ENCODE measurements at regions of chr9 and their contacts with region 1.

Region 1: GRCh38 chr9:34591248-34591916 is 1.9 kb upstream of the CNTFR start:
- DNase-seq: peak; percentile 70
- H3K4me3 ChIP-seq: no peak overlapping the region
- H3K27ac ChIP-seq: no peak overlapping the region
- H3K4me1 ChIP-seq: no peaks in the 10 kb centered on the region
- H3K27me3 ChIP-seq: peaks cover 66 to 75% of the 10 kb centered on the region in 2 experiments
- CTCF ChIP-seq: peak; percentile 88 to 99
- POLR2A ChIP-seq: no peak

Region 2: GRCh38 chr9:34279411-34279810 is 312.0 kb before region 1 on chr9:
- CTCF ChIA-PET with region 1: no interaction called
- POLR2A ChIA-PET with region 1: no interaction called
- dilution Hi-C with region 1: no loop called
- intact Hi-C with region 1: no loop called
- DNase-seq: peak; percentile 67
- H3K4me3 ChIP-seq: no peak overlapping the region
- H3K27ac ChIP-seq: no peak overlapping the region
- H3K4me1 ChIP-seq: peaks cover 11% of the 10 kb centered on the region
- H3K27me3 ChIP-seq: no peaks in the 10 kb centered on the region
- CTCF ChIP-seq: no peak
- POLR2A ChIP-seq: no peak

Region 3: GRCh38 chr9:34328987-34329832 is 262.2 kb before region 1 on chr9 and contains the starts of genes KIF24 and NUDT2:
- CTCF ChIA-PET with region 1: interaction called, 16 read pairs
- POLR2A ChIA-PET with region 1: no interaction called
- dilution Hi-C with region 1: no loop called
- intact Hi-C with region 1: no loop called
- DNase-seq: peak; percentile 100
- H3K4me3 ChIP-seq: peak within 1 kb of the TSS; percentile 75 to 89 (median 87)
- H3K27ac ChIP-seq: peak within 1 kb of the TSS; percentile 89
- H3K4me1 ChIP-seq: peaks cover 8% of the 10 kb centered on the region
- H3K27me3 ChIP-seq: no peaks in the 10 kb centered on the region
- CTCF ChIP-seq: no peak
- POLR2A ChIP-seq: peak; percentile 91
- total RNA-seq, gene KIF24: 4.5 and 4.8 TPM in 2 replicates
- total RNA-seq, gene NUDT2: 25.1 and 25.2 TPM in 2 replicates

Region 4: DNA sequence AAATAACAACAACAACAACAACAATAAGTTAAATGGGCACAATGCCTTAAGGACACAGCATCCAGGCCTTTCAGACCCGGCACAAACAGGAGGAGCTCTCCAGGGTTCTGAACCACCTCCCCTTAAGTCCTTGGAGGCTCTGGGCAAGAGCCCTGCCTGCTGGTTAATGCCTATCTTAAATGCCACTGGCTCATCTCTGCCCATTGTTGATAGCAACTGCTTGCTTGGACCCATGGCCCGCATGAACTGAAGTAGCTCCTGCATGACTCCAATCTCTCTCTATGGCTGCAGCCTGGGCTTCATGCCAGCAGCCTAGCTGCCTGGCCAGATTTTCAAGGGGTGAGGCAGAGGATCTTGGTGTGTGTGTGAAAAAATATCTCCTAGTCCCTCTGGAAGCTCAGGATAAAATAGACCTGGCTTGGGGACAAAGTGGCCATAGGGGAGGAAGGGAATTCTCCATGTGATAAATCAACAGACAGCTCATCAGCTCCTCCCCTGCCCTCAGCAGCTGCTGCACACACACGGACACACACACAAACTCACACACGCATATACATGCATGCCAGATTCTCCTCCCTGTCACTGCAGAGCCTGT is 160.4 kb before region 1 on chr9:
- CTCF ChIA-PET with region 1: interaction called, 58 read pairs
- POLR2A ChIA-PET with region 1: no interaction called
- dilution Hi-C with region 1: no loop called
- intact Hi-C with region 1: loop called (anchors 2 kb)
- DNase-seq: peak; percentile 64
- H3K4me3 ChIP-seq: no peak overlapping the region
- H3K27ac ChIP-seq: no peak overlapping the region
- H3K4me1 ChIP-seq: peaks cover 15% of the 10 kb centered on the region
- H3K27me3 ChIP-seq: no peaks in the 10 kb centered on the region
- CTCF ChIP-seq: no peak
- POLR2A ChIP-seq: no peak

Region 5: GRCh38 chr9:34500623-34501267 is 90.6 kb before region 1 on chr9:
- CTCF ChIA-PET with region 1: interaction called, 43 read pairs
- POLR2A ChIA-PET with region 1: no interaction called
- dilution Hi-C with region 1: no loop called
- intact Hi-C with region 1: no loop called
- DNase-seq: peak; percentile 46
- H3K4me3 ChIP-seq: no peak overlapping the region
- H3K27ac ChIP-seq: no peak overlapping the region
- H3K4me1 ChIP-seq: peaks cover 13% of the 10 kb centered on the region
- H3K27me3 ChIP-seq: peaks cover 10 to 17% of the 10 kb centered on the region in 2 experiments
- CTCF ChIP-seq: peak; percentile 85 to 93
- POLR2A ChIP-seq: no peak

Region 6: DNA sequence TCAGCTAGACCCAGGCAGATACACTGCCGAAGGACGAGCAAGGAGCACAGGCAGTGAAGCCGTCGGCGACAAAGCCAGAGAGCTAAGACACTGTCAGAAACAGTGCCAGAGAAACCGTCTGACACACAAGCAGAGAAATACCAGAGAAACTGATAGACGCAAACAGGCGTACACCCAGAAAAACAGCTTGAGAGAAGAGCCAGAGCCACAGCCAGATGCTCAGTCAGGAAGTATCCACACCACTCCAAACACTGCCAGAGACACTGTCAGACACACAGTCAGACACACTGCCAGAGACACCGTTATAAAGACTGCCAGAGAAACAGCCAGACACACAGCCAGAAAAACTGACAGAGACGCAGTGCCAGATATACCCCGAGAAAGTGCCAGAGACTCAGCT is 21.0 kb before region 1 on chr9:
- CTCF ChIA-PET with region 1: interaction called, 17 read pairs
- POLR2A ChIA-PET with region 1: no interaction called
- dilution Hi-C with region 1: no loop called
- intact Hi-C with region 1: no loop called
- DNase-seq: no peak
- H3K4me3 ChIP-seq: no peak overlapping the region
- H3K27ac ChIP-seq: no peak overlapping the region
- H3K4me1 ChIP-seq: no peaks in the 10 kb centered on the region
- H3K27me3 ChIP-seq: peaks cover 6 to 7% of the 10 kb centered on the region in 2 experiments
- CTCF ChIP-seq: no peak
- POLR2A ChIP-seq: no peak

Region 7: GRCh38 chr9:34603610-34604231 is 12.3 kb after region 1 on chr9:
- CTCF ChIA-PET with region 1: interaction called, 104 read pairs
- POLR2A ChIA-PET with region 1: no interaction called
- dilution Hi-C with region 1: no loop called
- intact Hi-C with region 1: no loop called
- DNase-seq: peak; percentile 77
- H3K4me3 ChIP-seq: no peak overlapping the region
- H3K27ac ChIP-seq: no peak overlapping the region
- H3K4me1 ChIP-seq: no peaks in the 10 kb centered on the region
- H3K27me3 ChIP-seq: peaks cover 0 to 10% of the 10 kb centered on the region in 2 experiments
- CTCF ChIP-seq: peak; percentile 85 to 89
- POLR2A ChIP-seq: no peak